Activated T-helper 1 cell treated with anti-CD3 and anti-CD28 coated beads, Interleukin-12 subunit alpha, Interleukin-12 subunit beta, Interleukin-2, Interleukin-4 antibody, amounts not matched to agents 30 ng/mL and 10 ng/mL and 1 ng/mL, durations not matched to agents 14 hours and 24 hours and 36 hours (primary cell): ENCODE measurements at regions of chr14 and their contacts with region 1.

Region 1: GRCh38 chr14:50038398-50039119 is 77.8 kb downstream of the VCPKMT start:
- DNase-seq: peak; percentile 71
- H3K4me3 Mint-ChIP-seq: peak overlapping the region; percentile 78
- H3K27ac Mint-ChIP-seq: peak overlapping the region; percentile 98
- H3K4me1 Mint-ChIP-seq: peaks cover 79% of the 10 kb centered on the region
- H3K27me3 Mint-ChIP-seq: no peaks in the 10 kb centered on the region

Region 2: GRCh38 chr14:49862089-49862673 is 176.4 kb before region 1 on chr14:
- intact Hi-C with region 1: loop called (anchors 1 kb)
- DNase-seq: peak; percentile 81
- H3K4me3 Mint-ChIP-seq: no peak overlapping the region
- H3K27ac Mint-ChIP-seq: no peak overlapping the region
- H3K4me1 Mint-ChIP-seq: peaks cover 10% of the 10 kb centered on the region
- H3K27me3 Mint-ChIP-seq: peaks cover 6% of the 10 kb centered on the region

Region 3: GRCh38 chr14:49892636-49893308 is 145.8 kb before region 1 on chr14 and contains the start of gene ARF6:
- intact Hi-C with region 1: loop called (anchors 1 kb)
- DNase-seq: peak; percentile 97
- H3K4me3 Mint-ChIP-seq: peak within 1 kb of the TSS; percentile 99
- H3K27ac Mint-ChIP-seq: peak within 1 kb of the TSS; percentile 100
- H3K4me1 Mint-ChIP-seq: peaks cover 19% of the 10 kb centered on the region
- H3K27me3 Mint-ChIP-seq: peaks cover 2% of the 10 kb centered on the region
- total RNA-seq, gene ARF6: 163 and 164 TPM in 2 replicates

Region 4: GRCh38 chr14:49984424-49984823 is 54.1 kb before region 1 on chr14:
- intact Hi-C with region 1: loop called (anchors 1 kb)
- DNase-seq: no peak
- H3K4me3 Mint-ChIP-seq: no peak overlapping the region
- H3K27ac Mint-ChIP-seq: peak overlapping the region; percentile 93
- H3K4me1 Mint-ChIP-seq: peaks cover 66% of the 10 kb centered on the region
- H3K27me3 Mint-ChIP-seq: no peaks in the 10 kb centered on the region

Region 5: GRCh38 chr14:50061664-50062437 is 23.3 kb after region 1 on chr14:
- intact Hi-C with region 1: loop called (anchors 1 kb)
- DNase-seq: peak; percentile 67
- H3K4me3 Mint-ChIP-seq: peak overlapping the region; percentile 99
- H3K27ac Mint-ChIP-seq: peak overlapping the region; percentile 100
- H3K4me1 Mint-ChIP-seq: peaks cover 94% of the 10 kb centered on the region
- H3K27me3 Mint-ChIP-seq: no peaks in the 10 kb centered on the region

Region 6: GRCh38 chr14:50109342-50109741 is 70.8 kb after region 1 on chr14:
- intact Hi-C with region 1: loop called (anchors 1 kb)
- DNase-seq: no peak
- H3K4me3 Mint-ChIP-seq: no peak overlapping the region
- H3K27ac Mint-ChIP-seq: no peak overlapping the region
- H3K4me1 Mint-ChIP-seq: peaks cover 28% of the 10 kb centered on the region
- H3K27me3 Mint-ChIP-seq: no peaks in the 10 kb centered on the region

Region 7: GRCh38 chr14:50344116-50344775 is 305.7 kb after region 1 on chr14:
- intact Hi-C with region 1: loop called (anchors 1 kb)
- DNase-seq: peak; percentile 47
- H3K4me3 Mint-ChIP-seq: peak overlapping the region; percentile 30
- H3K27ac Mint-ChIP-seq: peak overlapping the region; percentile 69
- H3K4me1 Mint-ChIP-seq: peaks cover 32% of the 10 kb centered on the region
- H3K27me3 Mint-ChIP-seq: peaks cover 18% of the 10 kb centered on the region